ENCODE measurements at regions of chr7 and their contacts with region 1.

Region 1: GRCh38 chr7:141654551-141654950 is 47.4 kb downstream of the DENND11 start:
- DNase-seq: peak; percentile 20 to 75 (median 51)
- H3K4me3 ChIP-seq: no peak overlapping the region
- H3K4me3 Mint-ChIP-seq: no peak overlapping the region
- H3K27ac ChIP-seq: no peak overlapping the region
- H3K27ac Mint-ChIP-seq: peak overlapping the region; percentile 5 to 86 (median 71)
- H3K4me1 ChIP-seq: peaks cover 4% of the 10 kb centered on the region
- H3K4me1 Mint-ChIP-seq: peaks cover 4 to 6% (median 6%) of the 10 kb centered on the region in 3 donors
- H3K27me3 ChIP-seq: no peaks in the 10 kb centered on the region
- H3K27me3 Mint-ChIP-seq: no peaks in the 10 kb centered on the region

Region 2: DNA sequence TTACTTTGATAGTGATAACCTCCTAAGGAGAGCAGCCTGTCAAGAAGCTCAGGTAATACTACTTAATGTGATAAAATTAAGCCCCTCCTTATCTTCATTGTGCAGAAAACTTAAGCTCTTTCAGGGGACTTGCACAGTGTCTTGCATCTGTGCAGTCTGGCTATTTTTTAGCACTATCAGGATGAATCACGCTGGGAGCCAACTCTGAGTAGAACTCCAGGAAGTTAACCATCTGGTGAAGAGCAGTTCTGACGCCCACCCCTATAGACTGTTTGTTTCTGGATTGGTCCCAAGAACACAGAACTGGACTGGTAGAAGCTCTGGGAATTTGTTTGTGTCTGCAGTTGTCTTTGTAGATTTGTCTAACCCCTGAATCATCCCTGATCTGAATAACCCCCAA is 61.4 kb before region 1 on chr7:
- CTCF ChIA-PET with region 1: no interaction called
- POLR2A ChIA-PET with region 1: no interaction called
- DNase-seq: no peak
- H3K4me3 ChIP-seq: no peak overlapping the region
- H3K4me3 Mint-ChIP-seq: no peak overlapping the region
- H3K27ac ChIP-seq: no peak overlapping the region
- H3K27ac Mint-ChIP-seq: peak overlapping the region in 2 of 8 donors; percentile 17 to 53
- H3K4me1 ChIP-seq: no peaks in the 10 kb centered on the region
- H3K4me1 Mint-ChIP-seq: peaks cover 16 to 25% (median 22%) of the 10 kb centered on the region in 3 donors
- H3K27me3 ChIP-seq: no peaks in the 10 kb centered on the region
- H3K27me3 Mint-ChIP-seq: no peaks in the 10 kb centered on the region

Region 3: DNA sequence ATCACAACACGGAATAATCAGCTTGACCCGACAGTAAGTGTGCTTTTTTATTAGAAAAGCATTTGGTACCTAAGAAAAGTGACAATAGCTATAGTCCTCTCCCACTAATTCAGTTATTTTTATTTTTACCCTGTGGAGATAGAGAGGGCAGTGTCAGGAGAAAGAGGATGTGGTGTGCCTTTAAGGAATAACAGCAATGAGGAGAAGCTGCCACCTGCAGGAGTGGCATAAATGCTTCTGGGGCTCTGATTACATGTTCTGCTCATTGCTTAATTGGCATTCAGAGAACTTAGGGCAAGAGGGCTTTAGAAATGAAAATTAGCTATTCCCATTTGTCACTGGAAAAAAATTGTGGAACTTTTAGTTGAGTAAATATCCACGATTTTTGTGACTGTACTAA is 12.7 kb before region 1 on chr7:
- CTCF ChIA-PET with region 1: interaction called, 16 read pairs
- POLR2A ChIA-PET with region 1: no interaction called
- DNase-seq: no peak
- H3K4me3 ChIP-seq: no peak overlapping the region
- H3K4me3 Mint-ChIP-seq: no peak overlapping the region
- H3K27ac ChIP-seq: no peak overlapping the region
- H3K27ac Mint-ChIP-seq: peak overlapping the region in 1 of 8 donors; percentile 52
- H3K4me1 ChIP-seq: no peaks in the 10 kb centered on the region
- H3K4me1 Mint-ChIP-seq: no peaks in the 10 kb centered on the region
- H3K27me3 ChIP-seq: no peaks in the 10 kb centered on the region
- H3K27me3 Mint-ChIP-seq: no peaks in the 10 kb centered on the region

Region 4: DNA sequence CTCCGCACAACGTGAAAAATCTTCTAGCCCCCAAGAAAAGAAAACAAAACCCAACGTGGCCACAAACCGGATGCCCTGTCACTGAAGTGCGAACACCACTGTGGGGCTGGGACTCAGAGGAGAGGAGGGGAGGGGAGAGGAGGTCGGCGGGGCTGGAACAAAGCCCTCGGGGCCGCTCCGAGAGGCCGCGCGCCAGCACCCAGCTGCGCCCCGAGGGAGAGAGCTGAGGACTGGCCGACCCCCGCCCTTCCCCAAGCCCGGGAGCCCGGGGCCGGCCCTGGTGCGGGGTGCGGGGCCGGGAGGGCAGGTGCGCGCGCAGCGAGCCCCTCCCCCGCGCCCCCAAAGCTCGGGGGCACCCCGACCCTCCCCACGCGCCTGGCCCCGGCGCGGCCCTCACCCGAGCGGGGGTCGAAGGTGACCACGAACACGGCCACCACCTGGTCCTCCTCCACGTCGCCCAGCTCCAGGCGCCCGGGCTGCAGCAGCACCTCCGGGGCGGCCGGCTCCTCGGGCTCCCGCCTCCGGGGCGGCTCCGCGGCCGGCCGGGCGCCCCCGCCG is 47.0 kb after region 1 on chr7:
- CTCF ChIA-PET with region 1: interaction called, 10 read pairs
- POLR2A ChIA-PET with region 1: no interaction called
- DNase-seq: peak; percentile 74 to 88 (median 83)
- H3K4me3 ChIP-seq: peak overlapping the region; percentile 38
- H3K4me3 Mint-ChIP-seq: peak overlapping the region; percentile 87 to 93 (median 91)
- H3K27ac ChIP-seq: peak overlapping the region; percentile 53
- H3K27ac Mint-ChIP-seq: peak overlapping the region; percentile 81 to 97 (median 89)
- H3K4me1 ChIP-seq: peaks cover 34% of the 10 kb centered on the region
- H3K4me1 Mint-ChIP-seq: peaks cover 44 to 52% (median 50%) of the 10 kb centered on the region in 3 donors
- H3K27me3 ChIP-seq: no peaks in the 10 kb centered on the region
- H3K27me3 Mint-ChIP-seq: peaks cover 3 to 4% of the 10 kb centered on the region in 2 donors

Region 5: GRCh38 chr7:141710301-141710700 is 55.8 kb after region 1 on chr7:
- CTCF ChIA-PET with region 1: interaction called, 17 read pairs
- POLR2A ChIA-PET with region 1: no interaction called
- DNase-seq: no peak
- H3K4me3 ChIP-seq: no peak overlapping the region
- H3K4me3 Mint-ChIP-seq: no peak overlapping the region
- H3K27ac ChIP-seq: no peak overlapping the region
- H3K27ac Mint-ChIP-seq: peak overlapping the region in 2 of 8 donors; percentile 4 to 26
- H3K4me1 ChIP-seq: no peaks in the 10 kb centered on the region
- H3K4me1 Mint-ChIP-seq: peaks cover 3 to 5% (median 5%) of the 10 kb centered on the region in 3 donors
- H3K27me3 ChIP-seq: no peaks in the 10 kb centered on the region
- H3K27me3 Mint-ChIP-seq: peaks cover 0 to 1% of the 10 kb centered on the region in 2 donors

Region 6: GRCh38 chr7:141737834-141738591 is 83.5 kb after region 1 on chr7 and contains the start of gene SSBP1:
- CTCF ChIA-PET with region 1: interaction called, 34 read pairs
- POLR2A ChIA-PET with region 1: interaction called, 5 read pairs
- DNase-seq: peak; percentile 80 to 93 (median 92)
- H3K4me3 ChIP-seq: peak within 1 kb of the TSS; percentile 76
- H3K4me3 Mint-ChIP-seq: peak within 1 kb of the TSS; percentile 93 to 99 (median 98)
- H3K27ac ChIP-seq: peak within 1 kb of the TSS; percentile 85
- H3K27ac Mint-ChIP-seq: peak within 1 kb of the TSS; percentile 88 to 99 (median 98)
- H3K4me1 ChIP-seq: peaks cover 33% of the 10 kb centered on the region
- H3K4me1 Mint-ChIP-seq: peaks cover 42 to 66% (median 63%) of the 10 kb centered on the region in 3 donors
- H3K27me3 ChIP-seq: no peaks in the 10 kb centered on the region
- H3K27me3 Mint-ChIP-seq: no peaks in the 10 kb centered on the region
- total RNA-seq, gene SSBP1: 284 to 291 TPM

Region 7: DNA sequence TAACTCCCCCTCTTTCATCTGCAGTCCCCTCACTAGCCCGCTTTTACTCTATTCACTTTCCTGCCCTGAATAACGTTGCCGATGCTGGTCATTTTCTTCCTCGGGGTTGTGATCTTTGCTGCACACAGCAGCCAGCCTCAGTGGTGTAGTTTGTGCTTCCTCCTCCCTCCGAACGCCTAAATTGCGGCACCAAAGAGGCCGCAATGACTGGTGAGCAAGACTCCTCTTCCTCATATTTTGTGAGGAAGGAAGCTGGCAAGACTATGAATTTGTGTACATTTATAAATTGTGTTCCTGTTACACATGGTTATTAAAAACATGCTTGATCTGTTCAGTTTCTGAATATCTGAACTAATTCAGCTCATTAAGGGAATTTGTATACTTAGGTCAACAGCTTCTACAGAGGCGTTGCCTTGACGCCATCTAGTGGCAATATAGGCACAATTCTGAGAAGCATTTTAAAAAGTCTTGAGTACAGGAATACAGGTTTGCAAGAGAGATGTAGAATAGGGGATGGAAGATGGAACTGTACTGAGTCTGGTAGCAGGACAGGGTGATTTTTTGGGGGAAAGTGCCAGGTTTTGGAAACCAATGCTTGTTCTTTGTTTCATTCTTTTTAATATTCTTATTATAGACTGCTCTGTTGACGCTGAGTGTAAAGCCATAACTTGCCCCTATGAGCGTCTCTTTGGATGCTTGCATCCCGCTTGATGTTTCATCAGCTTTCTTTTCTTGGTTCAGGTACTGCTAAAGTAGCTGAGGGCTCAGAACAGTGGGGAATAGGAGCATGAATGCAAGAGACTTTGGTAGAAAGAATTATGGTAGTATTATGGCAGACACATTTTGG is 131.4 kb after region 1 on chr7:
- CTCF ChIA-PET with region 1: interaction called, 39 read pairs
- POLR2A ChIA-PET with region 1: no interaction called
- DNase-seq: peak in 2 of 5 donors; percentile 21 to 32
- H3K4me3 ChIP-seq: no peak overlapping the region
- H3K4me3 Mint-ChIP-seq: no peak overlapping the region
- H3K27ac ChIP-seq: no peak overlapping the region
- H3K27ac Mint-ChIP-seq: peak overlapping the region in 1 of 8 donors; percentile 13
- H3K4me1 ChIP-seq: no peaks in the 10 kb centered on the region
- H3K4me1 Mint-ChIP-seq: peaks cover 0 to 3% (median 0%) of the 10 kb centered on the region in 3 donors
- H3K27me3 ChIP-seq: no peaks in the 10 kb centered on the region
- H3K27me3 Mint-ChIP-seq: no peaks in the 10 kb centered on the region